Naive thymus-derived CD4-positive, alpha-beta T cell (primary cell): ENCODE measurements at regions of chr19 and their contacts with region 1.

Region 1: GRCh38 chr19:29694669-29695627 is 20.1 kb downstream of the C19orf12 start:
- DNase-seq: peak; percentile 70 to 86 (median 78)
- ATAC-seq: peak; percentile 98
- H3K4me3 ChIP-seq: no peak overlapping the region
- H3K4me3 Mint-ChIP-seq: peak overlapping the region in 2 of 10 donors; percentile 14 to 36
- H3K27ac ChIP-seq: no peak overlapping the region
- H3K27ac Mint-ChIP-seq: peak overlapping the region; percentile 63 to 87 (median 81)
- H3K4me1 ChIP-seq: peaks cover 0 to 16% of the 10 kb centered on the region in 2 donors
- H3K4me1 Mint-ChIP-seq: peaks cover 9 to 29% (median 17%) of the 10 kb centered on the region in 7 donors
- H3K27me3 ChIP-seq: no peaks in the 10 kb centered on the region
- H3K27me3 Mint-ChIP-seq: no peaks in the 10 kb centered on the region

Region 2: DNA sequence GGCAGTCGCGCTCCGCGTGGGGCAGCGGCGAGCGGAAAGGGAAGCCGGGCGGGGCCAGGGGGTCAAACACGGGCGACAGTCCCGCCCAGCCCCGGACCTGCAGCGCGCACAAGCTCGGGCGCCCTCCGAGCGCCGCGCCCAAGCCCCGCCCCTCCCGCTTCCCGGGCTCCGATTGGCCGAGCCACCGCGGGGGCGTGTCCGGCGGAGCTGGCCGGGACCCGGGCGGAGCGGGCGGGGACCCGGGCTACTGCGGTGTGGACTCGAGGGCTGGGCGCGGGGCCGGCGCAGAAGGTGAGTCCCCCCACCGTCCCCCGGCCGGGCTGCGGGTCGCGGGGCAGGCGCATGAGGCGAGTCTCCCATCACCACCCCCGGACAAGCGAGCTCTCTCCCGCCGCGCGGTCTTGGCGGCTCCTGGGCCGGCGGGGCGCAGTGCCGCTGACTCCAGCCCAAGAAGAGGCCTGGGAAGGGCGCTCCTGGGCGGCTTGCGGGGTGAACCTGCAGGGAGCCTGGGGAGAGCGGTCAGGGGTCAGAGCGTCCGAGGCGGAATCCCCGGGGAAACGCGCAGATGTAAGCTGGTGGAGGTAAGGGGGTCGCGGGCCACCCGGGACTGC is 29.6 kb before region 1 on chr19 and contains the start of gene PLEKHF1:
- CTCF ChIA-PET with region 1: interaction called, 5 read pairs
- POLR2A ChIA-PET with region 1: interaction called, 15 read pairs
- intact Hi-C with region 1: loop called in 1 of 2 experiments (anchors 1 kb)
- DNase-seq: peak; percentile 66 to 99 (median 79)
- ATAC-seq: peak; percentile 86
- H3K4me3 ChIP-seq: peak within 1 kb of the TSS; percentile 62
- H3K4me3 Mint-ChIP-seq: peak within 1 kb of the TSS; percentile 89 to 98 (median 93)
- H3K27ac ChIP-seq: peak within 1 kb of the TSS; percentile 94
- H3K27ac Mint-ChIP-seq: peak within 1 kb of the TSS; percentile 88 to 100 (median 97)
- H3K4me1 ChIP-seq: peaks cover 33 to 55% of the 10 kb centered on the region in 2 donors
- H3K4me1 Mint-ChIP-seq: peaks cover 36 to 80% (median 71%) of the 10 kb centered on the region in 7 donors
- H3K27me3 ChIP-seq: no peaks in the 10 kb centered on the region
- H3K27me3 Mint-ChIP-seq: no peaks in the 10 kb centered on the region
- total RNA-seq, gene PLEKHF1: 11.1 to 47.2 (median 17.5) TPM

Region 3: GRCh38 chr19:29671393-29672160 is 23.4 kb before region 1 on chr19:
- CTCF ChIA-PET with region 1: interaction called, 15 read pairs
- POLR2A ChIA-PET with region 1: interaction called, 16 read pairs
- intact Hi-C with region 1: loop called in 1 of 2 experiments (anchors 1 kb)
- DNase-seq: peak in 8 of 9 donors; percentile 65 to 83 (median 76)
- ATAC-seq: peak; percentile 72
- H3K4me3 ChIP-seq: peak overlapping the region; percentile 50
- H3K4me3 Mint-ChIP-seq: peak overlapping the region; percentile 78 to 93 (median 82)
- H3K27ac ChIP-seq: peak overlapping the region; percentile 94
- H3K27ac Mint-ChIP-seq: peak overlapping the region; percentile 90 to 100 (median 98)
- H3K4me1 ChIP-seq: peaks cover 95 to 96% of the 10 kb centered on the region in 2 donors
- H3K4me1 Mint-ChIP-seq: peaks cover 60 to 96% (median 83%) of the 10 kb centered on the region in 7 donors
- H3K27me3 ChIP-seq: no peaks in the 10 kb centered on the region
- H3K27me3 Mint-ChIP-seq: no peaks in the 10 kb centered on the region

Region 4: GRCh38 chr19:29680447-29680846 is 14.5 kb before region 1 on chr19:
- CTCF ChIA-PET with region 1: interaction called, 14 read pairs
- POLR2A ChIA-PET with region 1: interaction called, 9 read pairs
- intact Hi-C with region 1: no loop called
- DNase-seq: peak; percentile 55 to 83 (median 78)
- ATAC-seq: peak; percentile 93
- H3K4me3 ChIP-seq: peak overlapping the region; percentile 56
- H3K4me3 Mint-ChIP-seq: peak overlapping the region; percentile 62 to 85 (median 77)
- H3K27ac ChIP-seq: peak overlapping the region; percentile 67
- H3K27ac Mint-ChIP-seq: peak overlapping the region; percentile 84 to 93 (median 91)
- H3K4me1 ChIP-seq: peaks cover 69 to 73% of the 10 kb centered on the region in 2 donors
- H3K4me1 Mint-ChIP-seq: peaks cover 41 to 89% (median 60%) of the 10 kb centered on the region in 7 donors
- H3K27me3 ChIP-seq: no peaks in the 10 kb centered on the region
- H3K27me3 Mint-ChIP-seq: no peaks in the 10 kb centered on the region

Region 5: GRCh38 chr19:29724102-29724641 is 29.2 kb after region 1 on chr19:
- CTCF ChIA-PET with region 1: interaction called, 16 read pairs
- POLR2A ChIA-PET with region 1: interaction called, 5 read pairs
- intact Hi-C with region 1: no loop called
- DNase-seq: peak in 7 of 9 donors; percentile 14 to 42 (median 36)
- ATAC-seq: peak; percentile 66
- H3K4me3 ChIP-seq: peak overlapping the region; percentile 8
- H3K4me3 Mint-ChIP-seq: peak overlapping the region; percentile 75 to 87 (median 84)
- H3K27ac ChIP-seq: no peak overlapping the region
- H3K27ac Mint-ChIP-seq: peak overlapping the region in 6 of 9 donors; percentile 41 to 86 (median 52)
- H3K4me1 ChIP-seq: peaks cover 0 to 9% of the 10 kb centered on the region in 2 donors
- H3K4me1 Mint-ChIP-seq: peaks cover 5 to 20% (median 15%) of the 10 kb centered on the region in 7 donors
- H3K27me3 ChIP-seq: no peaks in the 10 kb centered on the region
- H3K27me3 Mint-ChIP-seq: peaks cover 0 to 61% (median 6%) of the 10 kb centered on the region in 5 donors